MCF 10A (cell line): ENCODE measurements at regions of chr7 and their contacts with region 1.

Region 1: GRCh38 chr7:65037740-65038678 is 31.5 kb upstream of the ERV3-1 start:
- DNase-seq: peak; percentile 91
- H3K4me3 Mint-ChIP-seq: peak overlapping the region; percentile 80
- H3K27ac Mint-ChIP-seq: peak overlapping the region; percentile 61
- H3K4me1 Mint-ChIP-seq: peaks cover 7% of the 10 kb centered on the region
- H3K27me3 Mint-ChIP-seq: no peaks in the 10 kb centered on the region
- CTCF ChIP-seq: no peak

Region 2: GRCh38 chr7:64590971-64591370 is 447.0 kb before region 1 on chr7:
- CTCF ChIA-PET with region 1: no interaction called
- POLR2A ChIA-PET with region 1: no interaction called
- intact Hi-C with region 1: no loop called
- DNase-seq: no peak
- H3K4me3 Mint-ChIP-seq: no peak overlapping the region
- H3K27ac Mint-ChIP-seq: no peak overlapping the region
- H3K4me1 Mint-ChIP-seq: no peaks in the 10 kb centered on the region
- H3K27me3 Mint-ChIP-seq: no peaks in the 10 kb centered on the region
- CTCF ChIP-seq: no peak

Region 3: GRCh38 chr7:64951250-64951848 is 86.7 kb before region 1 on chr7:
- CTCF ChIA-PET with region 1: no interaction called
- POLR2A ChIA-PET with region 1: no interaction called
- intact Hi-C with region 1: loop called (anchors 5 kb)
- DNase-seq: peak; percentile 55
- H3K4me3 Mint-ChIP-seq: no peak overlapping the region
- H3K27ac Mint-ChIP-seq: no peak overlapping the region
- H3K4me1 Mint-ChIP-seq: no peaks in the 10 kb centered on the region
- H3K27me3 Mint-ChIP-seq: no peaks in the 10 kb centered on the region
- CTCF ChIP-seq: peak; percentile 73

Region 4: DNA sequence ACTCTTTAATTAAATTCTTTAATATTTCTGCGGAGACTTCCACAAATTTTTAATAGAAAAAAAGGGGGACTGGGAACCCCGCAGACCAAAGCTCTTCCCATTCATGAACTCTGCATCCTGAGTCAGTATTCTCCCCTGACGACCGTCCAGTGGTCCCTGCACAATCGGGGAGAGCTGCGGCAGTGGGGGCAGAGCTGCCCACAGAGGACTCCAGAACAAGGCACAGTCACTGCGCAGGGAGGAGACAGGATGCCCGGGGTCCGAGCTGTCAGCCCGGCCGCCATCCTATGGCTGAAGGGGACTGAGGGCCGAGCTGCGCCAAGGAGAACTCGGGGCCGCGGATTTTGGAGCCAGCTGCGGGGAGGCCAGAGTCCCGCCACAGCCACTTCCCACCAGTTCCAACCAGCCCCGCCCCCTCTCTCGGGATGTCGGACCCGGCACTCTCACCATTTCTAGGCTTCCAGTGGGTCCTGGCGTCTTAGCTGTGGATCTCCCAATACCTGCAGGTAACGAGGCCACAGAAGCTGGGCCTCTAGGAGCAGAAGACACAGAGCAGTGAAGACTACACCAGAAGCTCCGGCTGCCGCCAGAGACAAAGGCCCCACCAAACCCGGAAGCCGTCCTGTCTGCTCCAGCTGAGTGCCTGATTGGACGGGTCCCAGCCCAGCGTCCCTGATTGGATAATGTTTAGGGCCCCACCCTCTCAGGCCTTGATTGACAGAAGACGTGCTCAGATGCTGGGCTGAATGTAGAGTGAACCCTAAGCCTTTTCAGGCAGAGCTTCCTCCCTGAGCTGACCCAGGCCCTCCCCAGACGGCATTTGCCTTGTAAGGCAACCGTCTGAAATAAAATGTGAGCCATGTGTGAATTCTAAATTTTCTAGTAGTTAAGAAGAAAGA is 31.7 kb before region 1 on chr7 and contains the start of gene ERV3-1:
- CTCF ChIA-PET with region 1: no interaction called
- POLR2A ChIA-PET with region 1: interaction called, 53 read pairs
- intact Hi-C with region 1: no loop called
- DNase-seq: peak; percentile 95
- H3K4me3 Mint-ChIP-seq: peak within 1 kb of the TSS; percentile 93
- H3K27ac Mint-ChIP-seq: peak within 1 kb of the TSS; percentile 97
- H3K4me1 Mint-ChIP-seq: peaks cover 22% of the 10 kb centered on the region
- H3K27me3 Mint-ChIP-seq: no peaks in the 10 kb centered on the region
- CTCF ChIP-seq: no peak
- total RNA-seq, gene ERV3-1: 7.6 and 11.2 TPM in 2 replicates

Region 5: GRCh38 chr7:65287023-65287422 is 249.0 kb after region 1 on chr7:
- CTCF ChIA-PET with region 1: no interaction called
- POLR2A ChIA-PET with region 1: no interaction called
- intact Hi-C with region 1: no loop called
- DNase-seq: peak; percentile 48
- H3K4me3 Mint-ChIP-seq: no peak overlapping the region
- H3K27ac Mint-ChIP-seq: no peak overlapping the region
- H3K4me1 Mint-ChIP-seq: no peaks in the 10 kb centered on the region
- H3K27me3 Mint-ChIP-seq: no peaks in the 10 kb centered on the region
- CTCF ChIP-seq: no peak

Region 6: DNA sequence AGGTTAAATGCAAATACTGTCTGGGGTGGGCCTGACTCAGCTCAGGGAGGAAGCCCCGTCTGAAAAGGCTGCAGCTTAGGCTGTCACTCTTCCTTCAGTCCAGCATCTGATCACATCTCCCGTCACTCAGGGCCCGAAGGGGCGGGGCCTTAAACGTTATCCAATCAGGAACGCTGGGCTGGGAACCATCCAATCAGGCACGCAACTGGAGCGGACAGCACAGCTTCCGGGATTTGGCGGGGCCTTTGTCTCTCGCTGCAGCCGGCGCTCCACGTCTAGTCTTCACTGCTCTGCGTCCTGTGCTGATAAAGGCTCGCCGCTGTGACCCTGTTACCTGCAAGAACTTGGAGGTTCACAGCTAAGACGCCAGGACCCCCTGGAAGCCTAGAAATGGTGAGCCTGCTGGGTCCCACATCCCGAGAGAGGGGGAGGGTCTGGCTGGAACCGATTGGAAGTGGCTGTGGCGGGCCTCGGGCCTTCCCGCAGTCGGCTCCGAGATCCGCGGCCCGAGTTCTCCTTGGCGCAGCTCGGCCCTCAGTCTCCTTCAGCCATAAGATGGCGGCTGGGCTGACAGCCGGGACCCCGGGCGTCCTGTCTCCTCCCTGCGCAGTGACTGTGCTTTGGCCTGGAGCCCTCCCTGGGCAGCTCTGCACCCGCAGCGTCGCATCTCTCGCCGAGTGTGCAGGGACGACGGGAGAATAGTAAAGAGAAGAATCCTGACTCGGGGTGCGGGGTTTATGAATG is 335.8 kb after region 1 on chr7 and contains the start of gene ZNF92:
- CTCF ChIA-PET with region 1: no interaction called
- POLR2A ChIA-PET with region 1: no interaction called
- intact Hi-C with region 1: no loop called
- DNase-seq: peak; percentile 99
- H3K4me3 Mint-ChIP-seq: peak within 1 kb of the TSS; percentile 99
- H3K27ac Mint-ChIP-seq: peak within 1 kb of the TSS; percentile 98
- H3K4me1 Mint-ChIP-seq: peaks cover 8% of the 10 kb centered on the region
- H3K27me3 Mint-ChIP-seq: no peaks in the 10 kb centered on the region
- CTCF ChIP-seq: no peak
- total RNA-seq, gene ZNF92: 5.4 and 5.6 TPM in 2 replicates